Naive thymus-derived CD4-positive, alpha-beta T cell (primary cell): ENCODE measurements at regions of chr18 and their contacts with region 1.

Region 1: GRCh38 chr18:23884681-23885375 is 129.7 kb upstream of the TTC39C start:
- DNase-seq: no peak
- ATAC-seq: no peak
- H3K4me3 ChIP-seq: no peak overlapping the region
- H3K4me3 Mint-ChIP-seq: peak overlapping the region in 5 of 10 donors; percentile 43 to 71 (median 55)
- H3K27ac ChIP-seq: no peak overlapping the region
- H3K27ac Mint-ChIP-seq: peak overlapping the region in 6 of 9 donors; percentile 31 to 75 (median 47)
- H3K4me1 ChIP-seq: peaks cover 0 to 11% of the 10 kb centered on the region in 2 donors
- H3K4me1 Mint-ChIP-seq: peaks cover 17 to 44% (median 30%) of the 10 kb centered on the region in 7 donors
- H3K27me3 ChIP-seq: no peaks in the 10 kb centered on the region
- H3K27me3 Mint-ChIP-seq: peaks cover 0 to 2% (median 0%) of the 10 kb centered on the region in 5 donors

Region 2: GRCh38 chr18:23943104-23943503 is 58.3 kb after region 1 on chr18:
- CTCF ChIA-PET with region 1: no interaction called
- POLR2A ChIA-PET with region 1: no interaction called
- intact Hi-C with region 1: loop called in 1 of 2 experiments (anchors 5 kb)
- DNase-seq: peak in 6 of 9 donors; percentile 13 to 51 (median 39)
- ATAC-seq: peak; percentile 65
- H3K4me3 ChIP-seq: peak overlapping the region; percentile 42
- H3K4me3 Mint-ChIP-seq: peak overlapping the region; percentile 67 to 82 (median 74)
- H3K27ac ChIP-seq: peak overlapping the region; percentile 31
- H3K27ac Mint-ChIP-seq: peak overlapping the region; percentile 61 to 92 (median 80)
- H3K4me1 ChIP-seq: peaks cover 7 to 23% of the 10 kb centered on the region in 2 donors
- H3K4me1 Mint-ChIP-seq: peaks cover 11 to 47% (median 44%) of the 10 kb centered on the region in 7 donors
- H3K27me3 ChIP-seq: no peaks in the 10 kb centered on the region
- H3K27me3 Mint-ChIP-seq: peaks cover 0 to 36% (median 0%) of the 10 kb centered on the region in 5 donors